Lower lobe of right lung (tissue), 2 donors: ENCODE measurements at regions of chr2 and their contacts with region 1.

Region 1: GRCh38 chr2:52724585-52724984 is 1043.0 kb upstream of the CHAC2 start:
- DNase-seq: no peak
- ATAC-seq: no peak
- H3K4me3 ChIP-seq: no peak overlapping the region
- H3K27ac ChIP-seq: no peak overlapping the region
- H3K4me1 ChIP-seq: no peaks in the 10 kb centered on the region
- H3K27me3 ChIP-seq: no peaks in the 10 kb centered on the region
- CTCF ChIP-seq: no peak

Region 2: GRCh38 chr2:52539026-52539970 is 185.3 kb before region 1 on chr2:
- intact Hi-C with region 1: no loop called
- DNase-seq: no peak
- ATAC-seq: no peak
- H3K4me3 ChIP-seq: no peak overlapping the region
- H3K27ac ChIP-seq: no peak overlapping the region
- H3K4me1 ChIP-seq: no peaks in the 10 kb centered on the region
- H3K27me3 ChIP-seq: no peaks in the 10 kb centered on the region
- CTCF ChIP-seq: no peak

Region 3: GRCh38 chr2:52749776-52750175 is 25.2 kb after region 1 on chr2:
- intact Hi-C with region 1: loop called (anchors 2 kb)
- DNase-seq: no peak
- ATAC-seq: no peak
- H3K4me3 ChIP-seq: no peak overlapping the region
- H3K27ac ChIP-seq: no peak overlapping the region
- H3K4me1 ChIP-seq: no peaks in the 10 kb centered on the region
- H3K27me3 ChIP-seq: no peaks in the 10 kb centered on the region
- CTCF ChIP-seq: no peak

Region 4: GRCh38 chr2:53347269-53347668 is 622.7 kb after region 1 on chr2:
- intact Hi-C with region 1: no loop called
- DNase-seq: no peak
- ATAC-seq: no peak
- H3K4me3 ChIP-seq: no peak overlapping the region
- H3K27ac ChIP-seq: no peak overlapping the region
- H3K4me1 ChIP-seq: no peaks in the 10 kb centered on the region
- H3K27me3 ChIP-seq: no peaks in the 10 kb centered on the region
- CTCF ChIP-seq: no peak